ENCODE measurements at regions of chr10 and their contacts with region 1.

Region 1: DNA sequence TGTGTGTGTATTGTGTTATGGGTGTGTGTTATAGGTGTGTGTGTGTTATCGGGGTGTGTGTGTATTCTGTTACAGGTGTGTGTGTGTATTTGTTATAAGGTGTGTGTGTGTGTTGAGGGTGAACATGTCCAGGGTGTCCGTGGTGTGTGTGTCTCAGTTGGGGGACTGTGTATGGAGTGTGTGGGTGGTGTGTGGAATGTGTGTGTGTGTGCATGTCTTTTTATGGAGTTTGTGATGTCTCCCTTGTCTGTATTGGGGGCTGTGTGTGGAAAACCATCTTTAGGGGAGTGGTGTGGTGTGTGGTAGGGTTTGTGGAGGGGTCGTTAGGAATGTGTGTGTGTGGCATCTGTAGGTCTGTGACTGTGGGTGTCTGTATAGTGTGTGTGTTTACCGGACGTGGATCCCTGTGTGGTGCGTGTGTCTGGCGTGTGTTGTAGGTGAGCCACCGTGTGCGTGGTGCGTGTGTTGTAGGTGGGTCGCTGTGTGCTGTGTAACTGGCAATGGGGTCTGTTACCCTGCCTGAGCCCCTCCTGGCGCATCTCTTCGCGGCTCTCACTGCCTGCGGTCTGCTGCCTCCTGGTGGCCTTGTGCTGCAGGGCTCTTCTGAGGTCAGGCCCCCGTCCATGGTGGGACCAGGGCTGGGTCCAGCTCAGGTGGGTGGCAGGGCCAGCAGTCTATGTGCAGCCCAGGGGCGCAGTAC is 61.7 kb downstream of the PALD1 start:
- DNase-seq: peak; percentile 65 to 83 (median 80)
- ATAC-seq: peak; percentile 84
- H3K4me3 ChIP-seq: no peak overlapping the region
- H3K27ac ChIP-seq: no peak overlapping the region
- H3K4me1 ChIP-seq: peaks cover 0 to 39% of the 10 kb centered on the region in 2 experiments; a peak in 3 of 5 replicates
- H3K27me3 ChIP-seq: peaks cover 10 to 48% of the 10 kb centered on the region in 2 experiments; a peak in 3 of 5 replicates
- CTCF ChIP-seq: peak; percentile 88 to 95 (median 94)
- EP300 ChIP-seq: no peak
- POLR2A ChIP-seq: no peak
- RAD21 ChIP-seq: peak; percentile 71 to 92

Region 2: GRCh38 chr10:70212879-70213278 is 327.4 kb before region 1 on chr10:
- CTCF ChIA-PET with region 1: no interaction called
- POLR2A ChIA-PET with region 1: no interaction called
- in situ Hi-C with region 1: loop called (anchors 10 kb)
- intact Hi-C with region 1: no loop called
- DNase-seq: no peak
- ATAC-seq: no peak
- H3K4me3 ChIP-seq: no peak overlapping the region
- H3K27ac ChIP-seq: no peak overlapping the region
- H3K4me1 ChIP-seq: no peaks in the 10 kb centered on the region
- H3K27me3 ChIP-seq: no peaks in the 10 kb centered on the region
- CTCF ChIP-seq: no peak
- EP300 ChIP-seq: no peak
- POLR2A ChIP-seq: no peak
- RAD21 ChIP-seq: no peak

Region 3: GRCh38 chr10:70227548-70228320 is 312.5 kb before region 1 on chr10:
- CTCF ChIA-PET with region 1: no interaction called
- POLR2A ChIA-PET with region 1: no interaction called
- in situ Hi-C with region 1: no loop called
- intact Hi-C with region 1: loop called (anchors 10 kb)
- DNase-seq: no peak
- ATAC-seq: no peak
- H3K4me3 ChIP-seq: no peak overlapping the region
- H3K27ac ChIP-seq: no peak overlapping the region
- H3K4me1 ChIP-seq: peaks cover 2 to 17% of the 10 kb centered on the region in 2 experiments; a peak in 4 of 5 replicates
- H3K27me3 ChIP-seq: no peaks in the 10 kb centered on the region
- CTCF ChIP-seq: no peak
- EP300 ChIP-seq: no peak
- POLR2A ChIP-seq: no peak
- RAD21 ChIP-seq: no peak

Region 4: GRCh38 chr10:70381471-70382421 is 158.5 kb before region 1 on chr10:
- CTCF ChIA-PET with region 1: interaction called, 8 read pairs
- POLR2A ChIA-PET with region 1: no interaction called
- in situ Hi-C with region 1: no loop called
- intact Hi-C with region 1: loop called (anchors 2 kb)
- DNase-seq: peak; percentile 45 to 72 (median 59)
- ATAC-seq: peak; percentile 51
- H3K4me3 ChIP-seq: peak overlapping the region; percentile 66
- H3K27ac ChIP-seq: peak overlapping the region; percentile 31; the same call in 2 of the 3 replicates
- H3K4me1 ChIP-seq: peaks cover 12 to 22% of the 10 kb centered on the region in 2 experiments; a peak in 4 of 5 replicates
- H3K27me3 ChIP-seq: no peaks in the 10 kb centered on the region
- CTCF ChIP-seq: no peak
- EP300 ChIP-seq: no peak
- POLR2A ChIP-seq: no peak
- RAD21 ChIP-seq: peak in 1 of 2 experiments; percentile 8; a peak in 1 of 4 replicates

Region 5: DNA sequence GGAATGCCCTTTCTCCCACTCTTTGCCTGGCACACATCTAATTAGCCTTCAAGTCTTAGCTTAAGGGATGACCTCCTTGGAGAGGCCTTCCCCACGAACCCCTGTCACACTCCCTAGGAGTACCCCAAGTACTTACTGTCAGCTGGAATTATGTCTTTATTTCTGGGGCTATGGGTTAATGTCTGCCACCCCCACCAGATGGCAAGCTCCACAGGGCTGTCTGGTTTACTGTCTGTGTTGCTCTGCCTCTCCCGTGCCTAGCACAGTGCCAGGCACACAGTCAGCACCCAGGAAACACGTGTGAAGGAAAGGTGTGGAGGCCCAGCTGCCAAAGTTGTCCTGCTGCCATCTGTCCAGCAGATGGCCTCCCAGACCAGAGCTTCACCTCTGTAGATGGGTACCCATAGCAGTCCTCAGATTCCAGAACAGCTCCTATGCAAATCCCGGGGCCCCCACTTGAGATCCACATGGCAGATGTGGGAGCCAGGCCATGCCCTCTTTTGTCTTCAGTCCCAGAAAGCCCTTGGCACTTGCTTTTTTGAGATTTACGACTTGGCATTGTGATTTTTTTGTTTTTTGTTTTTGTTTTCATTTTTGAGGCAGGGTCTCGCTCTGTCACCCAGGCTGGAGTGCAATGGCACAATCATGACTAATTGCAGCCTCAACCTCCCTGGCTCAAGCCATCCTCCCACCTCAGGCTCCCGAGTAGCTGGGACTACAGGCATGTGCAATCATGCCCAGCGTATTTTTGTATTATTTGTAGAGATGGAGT is 78.8 kb before region 1 on chr10:
- CTCF ChIA-PET with region 1: interaction called, 13 read pairs
- POLR2A ChIA-PET with region 1: no interaction called
- in situ Hi-C with region 1: loop called (anchors 5 kb)
- intact Hi-C with region 1: loop called (anchors 1 kb)
- DNase-seq: peak; percentile 81 to 86 (median 83)
- ATAC-seq: peak; percentile 90
- H3K4me3 ChIP-seq: no peak overlapping the region
- H3K27ac ChIP-seq: no peak overlapping the region
- H3K4me1 ChIP-seq: peaks cover 5 to 15% of the 10 kb centered on the region in 2 experiments; a peak in 3 of 5 replicates
- H3K27me3 ChIP-seq: peaks cover 49 to 73% of the 10 kb centered on the region in 2 experiments
- CTCF ChIP-seq: peak; percentile 92 to 95 (median 94)
- EP300 ChIP-seq: no peak
- POLR2A ChIP-seq: no peak
- RAD21 ChIP-seq: peak; percentile 84 to 95

Region 6: DNA sequence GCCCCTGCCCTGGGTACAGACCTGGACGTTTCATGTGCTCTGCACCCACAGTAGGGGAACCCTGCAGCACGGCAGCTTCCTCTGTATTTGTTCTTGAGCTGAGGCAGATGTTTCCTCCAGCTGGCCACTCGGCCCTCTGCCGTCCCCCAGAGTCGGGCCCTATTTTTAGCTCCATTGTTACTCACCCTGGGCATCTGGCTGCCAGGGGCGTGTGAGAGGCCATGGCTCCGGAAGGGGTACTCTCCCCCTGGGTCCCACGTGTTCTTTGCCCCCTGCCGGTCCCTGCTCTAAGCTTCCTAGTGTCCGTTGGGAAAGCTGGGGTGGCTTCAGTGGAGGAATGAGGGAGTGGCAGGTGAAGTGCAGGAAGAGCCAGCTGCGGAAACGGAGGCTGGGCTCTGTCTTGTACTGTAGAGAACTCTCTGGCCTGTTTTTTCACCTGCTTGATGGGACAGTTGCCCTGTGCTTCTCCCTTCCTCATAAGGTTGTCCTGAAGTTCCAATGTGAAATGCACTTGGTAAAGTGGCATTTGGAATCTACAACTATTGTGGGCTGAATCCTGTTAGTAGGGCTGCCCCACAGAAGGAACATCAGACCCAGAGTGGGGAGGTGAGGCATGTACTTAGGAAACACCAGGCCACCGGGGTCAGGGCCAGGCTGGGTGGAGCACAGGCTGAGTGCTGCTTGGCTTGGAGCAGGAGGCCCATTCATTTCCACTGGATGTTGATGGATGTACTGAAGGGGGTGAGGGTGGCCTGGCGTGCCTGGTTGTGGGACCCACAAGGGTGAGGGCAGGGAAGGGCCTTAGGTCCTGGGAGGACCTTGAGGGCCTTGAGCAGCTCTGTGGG is 31.1 kb before region 1 on chr10:
- CTCF ChIA-PET with region 1: no interaction called
- POLR2A ChIA-PET with region 1: no interaction called
- in situ Hi-C with region 1: no loop called
- intact Hi-C with region 1: no loop called
- DNase-seq: peak in 1 of 4 experiments; percentile 37
- ATAC-seq: no peak
- H3K4me3 ChIP-seq: no peak overlapping the region
- H3K27ac ChIP-seq: no peak overlapping the region
- H3K4me1 ChIP-seq: peaks cover 0 to 3% of the 10 kb centered on the region in 2 experiments; a peak in 1 of 5 replicates
- H3K27me3 ChIP-seq: peaks cover 56 to 83% of the 10 kb centered on the region in 2 experiments
- CTCF ChIP-seq: no peak
- EP300 ChIP-seq: no peak
- POLR2A ChIP-seq: no peak
- RAD21 ChIP-seq: no peak